Mammary epithelial cell (primary cell): ENCODE measurements at regions of chr9 and their contacts with region 1.

Region 1: DNA sequence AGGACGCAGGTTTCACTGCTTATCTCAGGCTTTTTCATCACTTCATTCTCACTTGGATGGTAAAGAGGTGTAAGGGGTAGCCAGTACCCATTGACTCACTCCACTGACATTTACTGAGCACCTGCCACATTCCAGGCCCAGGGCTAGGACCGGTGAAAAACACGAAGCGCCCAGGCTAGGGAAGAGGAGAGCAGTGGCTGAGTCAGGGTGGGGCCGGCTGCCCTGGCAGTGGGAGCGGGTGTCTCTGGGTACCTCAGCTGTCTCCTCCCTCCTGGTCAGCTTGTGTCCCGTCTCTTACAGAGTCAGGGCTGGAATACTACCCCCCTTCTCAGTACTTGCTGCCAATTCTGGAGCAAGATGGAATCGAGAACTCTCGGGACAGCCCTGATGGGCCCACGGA is 22.2 kb downstream of the LRSAM1 start:
- DNase-seq: no peak
- H3K4me3 ChIP-seq: no peak overlapping the region
- H3K27ac ChIP-seq: no peak overlapping the region
- H3K4me1 ChIP-seq: no peaks in the 10 kb centered on the region
- H3K27me3 ChIP-seq: no peaks in the 10 kb centered on the region
- CTCF ChIP-seq: no peak

Region 2: DNA sequence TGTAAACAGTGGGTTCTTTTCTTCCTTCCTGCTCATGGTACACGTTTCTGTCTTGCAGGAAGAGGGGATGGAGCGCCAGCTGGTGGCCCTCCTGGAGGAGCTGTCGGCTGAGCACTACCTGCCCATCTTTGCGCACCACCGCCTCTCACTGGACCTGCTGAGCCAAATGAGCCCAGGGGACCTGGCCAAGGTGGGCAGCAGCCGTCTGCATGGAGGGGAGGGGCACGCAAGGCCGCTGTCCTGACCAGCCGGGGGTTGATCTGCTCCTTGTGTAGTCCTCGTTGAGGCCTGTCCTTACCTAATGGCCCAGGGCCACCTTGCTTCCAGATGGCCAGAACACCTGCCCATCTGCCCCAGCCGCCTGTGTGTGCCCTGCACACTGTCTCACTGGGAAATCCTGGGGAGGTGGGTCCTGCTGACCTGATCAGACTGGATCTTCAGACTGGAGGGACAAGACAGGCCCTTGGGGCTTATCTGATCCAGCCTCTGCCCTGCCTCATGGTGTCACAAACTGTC is 22.5 kb after region 1 on chr9:
- CTCF ChIA-PET with region 1: interaction called, 12 read pairs
- dilution Hi-C with region 1: no loop called
- in situ Hi-C with region 1: no loop called
- intact Hi-C with region 1: no loop called
- DNase-seq: no peak
- H3K4me3 ChIP-seq: no peak overlapping the region
- H3K27ac ChIP-seq: no peak overlapping the region
- H3K4me1 ChIP-seq: no peaks in the 10 kb centered on the region
- H3K27me3 ChIP-seq: no peaks in the 10 kb centered on the region
- CTCF ChIP-seq: no peak

Region 3: GRCh38 chr9:127921557-127922120 is 448.1 kb after region 1 on chr9:
- CTCF ChIA-PET with region 1: no interaction called
- dilution Hi-C with region 1: no loop called
- in situ Hi-C with region 1: no loop called
- intact Hi-C with region 1: no loop called
- DNase-seq: no peak
- H3K4me3 ChIP-seq: no peak overlapping the region
- H3K27ac ChIP-seq: no peak overlapping the region
- H3K4me1 ChIP-seq: peaks cover 44% of the 10 kb centered on the region
- H3K27me3 ChIP-seq: no peaks in the 10 kb centered on the region
- CTCF ChIP-seq: peak; percentile 79 to 80

Region 4: GRCh38 chr9:128164307-128164885 is 690.9 kb after region 1 on chr9:
- CTCF ChIA-PET with region 1: no interaction called
- dilution Hi-C with region 1: no loop called
- in situ Hi-C with region 1: no loop called
- intact Hi-C with region 1: no loop called
- DNase-seq: no peak
- H3K4me3 ChIP-seq: no peak overlapping the region
- H3K27ac ChIP-seq: peak overlapping the region; percentile 20
- H3K4me1 ChIP-seq: peaks cover 17% of the 10 kb centered on the region
- H3K27me3 ChIP-seq: no peaks in the 10 kb centered on the region
- CTCF ChIP-seq: no peak